Endothelial cell of umbilical vein (primary cell): ENCODE measurements at regions of chr1 and their contacts with region 1.

Region 1: DNA sequence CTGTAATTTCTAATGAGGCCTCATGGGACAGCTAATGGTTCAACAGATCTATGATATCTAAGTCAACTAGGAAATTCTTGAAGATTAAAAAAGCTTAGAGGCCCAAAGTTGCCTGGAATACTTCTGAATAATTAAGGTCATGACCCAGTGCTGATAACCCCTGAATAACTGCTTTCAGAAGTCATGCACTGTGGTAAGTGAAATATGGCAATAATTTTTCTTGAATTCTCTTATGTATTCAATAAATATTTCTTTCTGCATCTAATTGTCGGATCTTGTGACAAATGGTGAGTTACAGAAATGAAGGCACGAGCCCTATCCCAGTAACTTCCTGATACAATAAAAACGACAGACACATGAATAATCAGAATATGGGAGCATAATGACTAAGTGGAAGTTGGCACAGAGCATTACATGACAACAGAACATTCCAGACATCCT is 219.3 kb upstream of the GREM2 start:
- DNase-seq: peak; percentile 89
- H3K4me3 ChIP-seq: no peak overlapping the region
- H3K27ac ChIP-seq: peak overlapping the region; percentile 67
- H3K4me1 ChIP-seq: peaks cover 13% of the 10 kb centered on the region
- H3K27me3 ChIP-seq: no peaks in the 10 kb centered on the region
- CTCF ChIP-seq: no peak
- POLR2A ChIP-seq: no peak

Region 2: DNA sequence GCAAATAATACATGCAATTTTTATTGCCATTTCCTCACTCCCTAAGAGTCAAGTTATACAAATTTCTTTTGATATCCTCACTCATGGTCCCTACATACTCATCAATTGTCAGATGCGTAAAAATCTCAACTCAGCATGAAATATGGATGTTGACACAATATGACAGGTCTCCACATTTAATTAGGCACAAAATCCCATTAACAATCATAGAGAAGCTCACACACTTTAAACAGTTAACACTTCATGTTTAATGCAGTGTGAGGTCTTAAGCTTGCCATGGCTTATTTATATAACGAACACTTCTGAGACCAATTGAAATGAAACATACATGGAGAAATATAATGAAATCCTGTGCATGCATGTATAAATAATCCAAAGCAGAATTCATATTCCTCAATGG is 277.9 kb before region 1 on chr1:
- CTCF ChIA-PET with region 1: no interaction called
- POLR2A ChIA-PET with region 1: no interaction called
- dilution Hi-C with region 1: no loop called
- intact Hi-C with region 1: no loop called
- DNase-seq: no peak
- H3K4me3 ChIP-seq: no peak overlapping the region
- H3K27ac ChIP-seq: no peak overlapping the region
- H3K4me1 ChIP-seq: no peaks in the 10 kb centered on the region
- H3K27me3 ChIP-seq: no peaks in the 10 kb centered on the region
- CTCF ChIP-seq: no peak
- POLR2A ChIP-seq: no peak

Region 3: DNA sequence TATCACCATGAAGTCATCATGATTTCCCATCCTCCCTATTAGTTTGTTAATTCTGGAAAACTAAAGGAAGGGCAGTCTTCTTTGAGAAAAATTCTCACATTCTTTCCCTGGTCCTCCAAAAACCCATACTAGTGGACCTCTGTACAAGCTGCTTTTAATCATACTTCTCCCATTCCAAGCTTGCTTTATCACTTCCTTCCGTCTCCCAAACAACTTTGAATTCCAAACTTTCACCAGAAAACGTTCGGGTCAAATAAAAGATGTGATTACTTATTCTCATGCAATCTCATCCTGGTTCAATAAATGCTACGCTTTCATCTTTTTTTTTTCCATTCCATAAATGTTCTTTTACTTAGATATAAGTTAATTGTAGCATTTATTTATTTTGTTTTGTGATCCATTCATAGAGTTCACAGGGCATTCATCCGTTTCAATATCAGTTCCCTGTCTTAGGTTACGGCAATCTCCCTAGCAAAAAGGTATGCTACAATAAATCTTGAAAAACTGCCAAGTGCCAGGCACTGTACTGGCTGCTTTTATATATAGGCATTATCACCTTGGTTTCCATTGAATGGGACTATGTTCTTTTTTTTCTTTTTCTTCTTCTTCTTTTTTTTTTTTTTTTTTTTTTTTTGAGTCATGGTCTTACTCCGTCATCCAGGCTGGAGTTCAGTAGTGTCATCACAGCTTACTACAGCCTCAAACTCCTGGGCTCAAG is 119.0 kb before region 1 on chr1:
- CTCF ChIA-PET with region 1: no interaction called
- POLR2A ChIA-PET with region 1: no interaction called
- dilution Hi-C with region 1: no loop called
- intact Hi-C with region 1: no loop called
- DNase-seq: no peak
- H3K4me3 ChIP-seq: no peak overlapping the region
- H3K27ac ChIP-seq: no peak overlapping the region
- H3K4me1 ChIP-seq: no peaks in the 10 kb centered on the region
- H3K27me3 ChIP-seq: no peaks in the 10 kb centered on the region
- CTCF ChIP-seq: no peak
- POLR2A ChIP-seq: no peak

Region 4: DNA sequence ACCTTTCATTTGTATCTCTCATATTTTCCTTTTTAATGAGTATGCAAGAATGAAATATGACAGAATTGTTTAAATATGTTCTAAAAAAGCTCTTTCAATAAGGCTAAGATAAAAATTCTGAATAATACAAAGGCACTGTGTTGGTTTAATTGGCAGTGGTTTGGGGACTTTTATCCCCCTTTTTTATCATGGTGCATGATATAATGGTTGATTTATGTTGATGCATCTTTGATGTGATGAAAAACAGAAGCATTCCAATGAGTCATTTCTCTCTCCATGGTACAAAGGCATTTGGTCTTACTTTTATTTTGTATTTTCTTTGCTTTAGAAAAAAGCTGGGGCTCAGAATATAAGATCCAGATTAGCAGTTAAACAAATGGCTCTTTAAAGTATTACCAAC is 92.1 kb before region 1 on chr1:
- CTCF ChIA-PET with region 1: no interaction called
- POLR2A ChIA-PET with region 1: no interaction called
- dilution Hi-C with region 1: no loop called
- intact Hi-C with region 1: no loop called
- DNase-seq: no peak
- H3K4me3 ChIP-seq: no peak overlapping the region
- H3K27ac ChIP-seq: no peak overlapping the region
- H3K4me1 ChIP-seq: no peaks in the 10 kb centered on the region
- H3K27me3 ChIP-seq: no peaks in the 10 kb centered on the region
- CTCF ChIP-seq: no peak
- POLR2A ChIP-seq: no peak

Region 5: GRCh38 chr1:240765732-240766363 is 65.4 kb before region 1 on chr1:
- CTCF ChIA-PET with region 1: interaction called, 3 read pairs
- POLR2A ChIA-PET with region 1: no interaction called
- dilution Hi-C with region 1: no loop called
- intact Hi-C with region 1: loop called (anchors 1 kb)
- DNase-seq: peak; percentile 75
- H3K4me3 ChIP-seq: no peak overlapping the region
- H3K27ac ChIP-seq: peak overlapping the region; percentile 89
- H3K4me1 ChIP-seq: peaks cover 20% of the 10 kb centered on the region
- H3K27me3 ChIP-seq: no peaks in the 10 kb centered on the region
- CTCF ChIP-seq: no peak
- POLR2A ChIP-seq: no peak

Region 6: GRCh38 chr1:240803151-240803550 is 28.1 kb before region 1 on chr1:
- CTCF ChIA-PET with region 1: interaction called, 4 read pairs
- POLR2A ChIA-PET with region 1: no interaction called
- dilution Hi-C with region 1: no loop called
- intact Hi-C with region 1: loop called (anchors 1 kb)
- DNase-seq: peak; percentile 77
- H3K4me3 ChIP-seq: no peak overlapping the region
- H3K27ac ChIP-seq: peak overlapping the region; percentile 63
- H3K4me1 ChIP-seq: peaks cover 24% of the 10 kb centered on the region
- H3K27me3 ChIP-seq: no peaks in the 10 kb centered on the region
- CTCF ChIP-seq: no peak
- POLR2A ChIP-seq: no peak

Region 7: DNA sequence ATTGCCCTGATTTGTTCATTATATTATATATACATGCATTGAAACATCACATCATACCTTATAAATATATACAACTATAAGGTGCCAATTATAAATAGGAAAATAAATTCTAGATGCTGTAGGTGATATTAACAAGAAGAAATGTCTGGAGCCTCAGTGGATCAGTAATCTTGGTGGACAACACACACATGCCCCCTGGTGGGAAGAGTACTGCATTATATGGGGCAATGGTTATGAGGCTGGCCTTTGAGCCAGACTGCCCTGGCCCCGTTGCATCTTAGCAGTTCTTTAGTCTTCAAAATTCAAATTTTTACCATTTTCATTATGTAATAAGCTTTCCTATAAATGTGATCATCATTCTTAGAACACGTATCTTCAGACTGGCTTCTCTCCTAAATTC is 115.7 kb after region 1 on chr1:
- CTCF ChIA-PET with region 1: interaction called, 12 read pairs
- POLR2A ChIA-PET with region 1: no interaction called
- dilution Hi-C with region 1: no loop called
- intact Hi-C with region 1: loop called (anchors 1 kb)
- DNase-seq: peak; percentile 52
- H3K4me3 ChIP-seq: no peak overlapping the region
- H3K27ac ChIP-seq: no peak overlapping the region
- H3K4me1 ChIP-seq: peaks cover 11% of the 10 kb centered on the region
- H3K27me3 ChIP-seq: no peaks in the 10 kb centered on the region
- CTCF ChIP-seq: peak; percentile 52 to 54
- POLR2A ChIP-seq: no peak

Region 8: DNA sequence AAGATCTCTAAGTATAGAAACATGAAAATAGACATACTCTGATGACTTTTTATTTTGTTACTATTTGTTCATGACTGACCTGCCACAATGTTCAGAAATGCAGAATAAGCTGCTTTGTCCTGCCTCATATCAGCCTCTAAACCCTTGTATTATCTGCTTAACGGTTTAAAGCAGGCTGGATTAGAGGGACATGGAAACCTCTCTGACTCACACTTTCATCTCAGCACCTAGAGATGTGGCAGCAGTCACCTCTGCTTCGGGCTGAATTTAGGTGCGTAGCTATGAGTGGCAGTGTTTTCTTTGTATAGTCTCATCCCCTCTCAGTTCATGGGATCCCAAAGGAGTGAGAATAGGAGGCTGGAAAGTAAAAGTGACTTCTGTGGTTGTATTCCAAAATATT is 270.4 kb after region 1 on chr1:
- CTCF ChIA-PET with region 1: no interaction called
- POLR2A ChIA-PET with region 1: no interaction called
- dilution Hi-C with region 1: no loop called
- intact Hi-C with region 1: no loop called
- DNase-seq: no peak
- H3K4me3 ChIP-seq: no peak overlapping the region
- H3K27ac ChIP-seq: no peak overlapping the region
- H3K4me1 ChIP-seq: no peaks in the 10 kb centered on the region
- H3K27me3 ChIP-seq: no peaks in the 10 kb centered on the region
- CTCF ChIP-seq: no peak
- POLR2A ChIP-seq: no peak